ENCODE measurements at regions of chr19 and their contacts with region 1.

Region 1: GRCh38 chr19:14006243-14006765 is at the start of gene RFX1:
- DNase-seq: peak; percentile 99 to 100
- ATAC-seq: peak; percentile 66 to 85 (median 74)
- H3K4me3 ChIP-seq: peak within 1 kb of the TSS; percentile 77
- H3K4me3 Mint-ChIP-seq: peak within 1 kb of the TSS; percentile 95
- H3K27ac ChIP-seq: peak within 1 kb of the TSS; percentile 99
- H3K27ac Mint-ChIP-seq: peak within 1 kb of the TSS; percentile 99
- H3K4me1 ChIP-seq: peaks cover 47% of the 10 kb centered on the region
- H3K4me1 Mint-ChIP-seq: peaks cover 32 to 44% of the 10 kb centered on the region in 2 donors
- H3K27me3 ChIP-seq: no peaks in the 10 kb centered on the region
- H3K27me3 Mint-ChIP-seq: no peaks in the 10 kb centered on the region
- CTCF ChIP-seq: no peak
- total RNA-seq, gene RFX1: 26.0 to 31.8 (median 30.5) TPM

Region 2: DNA sequence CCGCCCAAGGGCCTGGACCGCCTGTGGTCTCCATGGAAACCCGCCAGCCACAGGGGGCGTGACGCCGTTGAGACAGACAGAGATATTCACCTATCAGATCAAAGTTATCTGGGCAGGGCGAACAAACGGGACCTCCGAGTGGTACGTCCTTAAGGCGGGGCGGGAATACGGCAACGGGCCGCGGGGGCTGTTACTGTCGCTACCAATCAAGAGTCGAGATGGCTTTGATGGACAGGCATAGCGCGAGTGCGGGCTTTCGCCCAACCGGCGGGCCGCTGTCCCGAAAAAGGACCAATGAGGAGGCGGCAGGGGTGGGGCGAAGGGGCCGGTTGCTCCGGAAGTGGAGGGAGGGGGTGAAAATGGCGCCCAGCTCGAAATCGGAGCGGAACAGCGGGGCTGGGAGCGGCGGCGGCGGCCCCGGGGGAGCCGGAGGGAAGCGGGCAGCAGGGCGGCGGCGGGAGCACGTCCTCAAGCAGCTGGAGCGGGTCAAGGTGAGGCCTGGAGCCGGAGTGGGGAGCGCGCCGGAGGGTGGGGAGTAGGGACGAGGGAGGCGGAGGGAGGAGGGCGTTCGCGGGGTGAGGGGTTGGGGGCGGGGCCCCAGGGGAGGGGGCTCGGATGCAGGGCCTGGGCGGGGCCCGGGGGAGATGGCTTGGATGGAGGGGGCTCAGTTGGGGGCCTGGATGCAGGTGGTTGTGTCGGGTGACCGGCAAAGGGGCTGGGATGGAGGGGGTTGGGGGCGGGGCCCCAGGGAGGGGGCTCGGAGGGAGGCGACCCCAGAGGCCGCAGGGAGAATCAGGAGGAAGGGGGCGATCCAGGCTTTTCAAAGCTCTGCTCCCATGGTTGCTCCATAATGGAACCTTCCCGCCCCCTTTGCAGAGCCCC is 53.9 kb before region 1 on chr19 and contains the start of gene DCAF15:
- intact Hi-C with region 1: loop called (anchors 1 kb)
- DNase-seq: peak; percentile 98 to 99
- ATAC-seq: peak; percentile 94 to 99 (median 95)
- H3K4me3 ChIP-seq: peak within 1 kb of the TSS; percentile 54
- H3K4me3 Mint-ChIP-seq: peak within 1 kb of the TSS; percentile 98
- H3K27ac ChIP-seq: peak within 1 kb of the TSS; percentile 51
- H3K27ac Mint-ChIP-seq: peak within 1 kb of the TSS; percentile 95 to 97
- H3K4me1 ChIP-seq: peaks cover 24% of the 10 kb centered on the region
- H3K4me1 Mint-ChIP-seq: peaks cover 7 to 27% of the 10 kb centered on the region in 2 donors
- H3K27me3 ChIP-seq: no peaks in the 10 kb centered on the region
- H3K27me3 Mint-ChIP-seq: no peaks in the 10 kb centered on the region
- CTCF ChIP-seq: no peak
- total RNA-seq, gene DCAF15: 121 to 149 (median 124) TPM

Region 3: GRCh38 chr19:13962699-13963602 is 43.4 kb before region 1 on chr19:
- intact Hi-C with region 1: no loop called
- DNase-seq: no peak
- ATAC-seq: no peak
- H3K4me3 ChIP-seq: no peak overlapping the region
- H3K4me3 Mint-ChIP-seq: no peak overlapping the region
- H3K27ac ChIP-seq: no peak overlapping the region
- H3K27ac Mint-ChIP-seq: no peak overlapping the region
- H3K4me1 ChIP-seq: no peaks in the 10 kb centered on the region
- H3K4me1 Mint-ChIP-seq: no peaks in the 10 kb centered on the region
- H3K27me3 ChIP-seq: no peaks in the 10 kb centered on the region
- H3K27me3 Mint-ChIP-seq: no peaks in the 10 kb centered on the region
- CTCF ChIP-seq: no peak

Region 4: GRCh38 chr19:13986348-13986904 is 19.9 kb before region 1 on chr19:
- intact Hi-C with region 1: loop called (anchors 1 kb)
- DNase-seq: peak; percentile 96 to 99
- ATAC-seq: peak; percentile 86 to 95 (median 87)
- H3K4me3 ChIP-seq: peak overlapping the region; percentile 17
- H3K4me3 Mint-ChIP-seq: peak overlapping the region; percentile 79
- H3K27ac ChIP-seq: peak overlapping the region; percentile 100
- H3K27ac Mint-ChIP-seq: peak overlapping the region; percentile 97 to 98
- H3K4me1 ChIP-seq: peaks cover 59% of the 10 kb centered on the region
- H3K4me1 Mint-ChIP-seq: peaks cover 29 to 49% of the 10 kb centered on the region in 2 donors
- H3K27me3 ChIP-seq: no peaks in the 10 kb centered on the region
- H3K27me3 Mint-ChIP-seq: no peaks in the 10 kb centered on the region
- CTCF ChIP-seq: no peak

Region 5: GRCh38 chr19:14048443-14049153 is 42.3 kb after region 1 on chr19:
- intact Hi-C with region 1: loop called (anchors 5 kb)
- DNase-seq: peak; percentile 79 to 84
- ATAC-seq: peak; percentile 87 to 98 (median 90)
- H3K4me3 ChIP-seq: no peak overlapping the region
- H3K4me3 Mint-ChIP-seq: no peak overlapping the region
- H3K27ac ChIP-seq: no peak overlapping the region
- H3K27ac Mint-ChIP-seq: peak overlapping the region; percentile 57 to 82
- H3K4me1 ChIP-seq: no peaks in the 10 kb centered on the region
- H3K4me1 Mint-ChIP-seq: peaks cover 0 to 11% of the 10 kb centered on the region in 2 donors
- H3K27me3 ChIP-seq: no peaks in the 10 kb centered on the region
- H3K27me3 Mint-ChIP-seq: no peaks in the 10 kb centered on the region
- CTCF ChIP-seq: peak; percentile 98

Region 6: GRCh38 chr19:14081325-14082093 is 75.2 kb after region 1 on chr19:
- intact Hi-C with region 1: loop called (anchors 2 kb)
- DNase-seq: peak; percentile 99 to 100
- ATAC-seq: peak; percentile 92 to 97 (median 94)
- H3K4me3 ChIP-seq: peak overlapping the region; percentile 49
- H3K4me3 Mint-ChIP-seq: peak overlapping the region; percentile 97
- H3K27ac ChIP-seq: peak overlapping the region; percentile 78
- H3K27ac Mint-ChIP-seq: peak overlapping the region; percentile 94 to 96
- H3K4me1 ChIP-seq: peaks cover 18% of the 10 kb centered on the region
- H3K4me1 Mint-ChIP-seq: peaks cover 6 to 14% of the 10 kb centered on the region in 2 donors
- H3K27me3 ChIP-seq: no peaks in the 10 kb centered on the region
- H3K27me3 Mint-ChIP-seq: no peaks in the 10 kb centered on the region
- CTCF ChIP-seq: no peak

Measured in natural killer cell (primary cell).